ENCODE measurements at regions of chr7 and their contacts with region 1.

Region 1: DNA sequence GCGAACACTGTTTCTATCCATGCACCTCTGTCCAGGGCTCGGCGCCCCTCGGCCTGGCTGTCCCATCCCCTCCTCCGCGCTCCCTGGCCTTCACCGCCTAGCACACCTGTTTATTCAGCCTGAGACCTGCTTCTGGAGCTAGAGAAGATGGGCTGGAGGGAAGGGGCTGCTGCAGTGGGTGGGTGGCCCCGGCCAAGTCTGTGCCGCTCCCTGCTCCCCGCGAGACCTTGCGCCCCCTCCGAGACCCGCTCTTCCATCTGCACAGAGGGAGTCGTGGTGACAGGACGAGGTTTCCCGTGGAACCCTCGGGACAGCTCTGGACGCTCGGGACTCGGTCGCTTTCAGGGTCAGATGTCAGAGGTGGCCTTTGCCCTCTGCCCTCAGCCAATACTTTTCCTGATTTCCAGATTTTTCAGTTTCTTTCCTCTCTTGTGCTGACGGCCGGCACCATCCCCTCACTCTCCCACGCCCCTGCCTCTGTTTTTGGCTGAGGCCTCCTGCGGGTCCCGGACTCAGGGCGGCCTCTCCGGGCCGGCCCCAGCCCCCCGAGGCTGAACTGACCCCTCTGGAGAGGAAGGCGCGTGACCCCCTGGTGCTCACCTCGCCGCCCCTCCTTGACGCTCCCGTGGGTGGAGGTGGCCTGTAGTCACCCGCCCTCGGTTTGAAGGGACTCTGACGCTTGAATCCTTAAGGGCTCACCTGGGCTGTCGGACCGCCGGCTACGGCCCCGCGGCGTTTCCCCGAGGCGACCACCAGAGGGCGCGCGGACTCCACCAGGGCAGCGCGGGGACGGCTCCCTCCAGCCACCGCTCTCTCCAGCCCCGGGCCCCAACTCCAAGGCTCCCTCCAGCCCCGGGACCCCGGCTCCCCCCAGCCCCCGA is 15.6 kb downstream of the SHH start:
- DNase-seq: no peak
- H3K4me3 ChIP-seq: no peak overlapping the region
- H3K27me3 ChIP-seq: peaks cover 10% of the 10 kb centered on the region
- CTCF ChIP-seq: peak; percentile 92

Region 2: GRCh38 chr7:156127166-156128134 is 330.8 kb after region 1 on chr7:
- CTCF ChIA-PET with region 1: no interaction called
- POLR2A ChIA-PET with region 1: no interaction called
- DNase-seq: no peak
- H3K4me3 ChIP-seq: no peak overlapping the region
- H3K27me3 ChIP-seq: no peaks in the 10 kb centered on the region
- CTCF ChIP-seq: no peak

Region 3: DNA sequence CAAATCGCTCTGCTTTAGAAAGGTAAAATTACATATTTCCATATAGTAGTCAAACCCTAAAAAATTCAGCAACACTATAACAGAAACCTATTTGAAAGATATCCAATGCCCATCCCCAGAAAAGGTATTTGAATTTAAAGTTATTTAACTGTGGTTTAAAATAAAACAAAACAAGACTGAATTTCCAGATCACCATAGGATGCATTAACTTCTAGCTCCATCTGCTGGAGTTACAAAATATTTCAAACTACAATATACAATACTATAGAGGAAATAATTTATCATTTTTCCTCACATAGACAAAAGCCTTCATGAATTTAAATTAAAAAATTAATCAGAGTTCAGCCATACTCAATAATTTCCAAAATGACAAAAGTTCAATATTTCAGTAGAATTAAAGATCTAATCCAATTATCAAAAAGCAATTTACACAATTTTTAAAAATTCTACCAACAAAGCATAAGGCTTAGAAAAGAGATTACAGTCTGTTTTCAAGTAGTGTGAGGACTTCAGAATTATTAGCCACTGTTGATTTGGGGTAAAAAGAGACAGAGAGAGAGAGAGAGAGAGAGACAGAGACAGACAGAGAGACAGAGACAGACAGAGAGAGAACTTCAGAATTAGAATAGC is 1020.4 kb after region 1 on chr7:
- CTCF ChIA-PET with region 1: interaction called, 13 read pairs
- POLR2A ChIA-PET with region 1: no interaction called
- DNase-seq: no peak
- H3K4me3 ChIP-seq: no peak overlapping the region
- H3K27me3 ChIP-seq: no peaks in the 10 kb centered on the region
- CTCF ChIP-seq: peak; percentile 38

Measured in BJ (cell line).